GM12878 (cell line): ENCODE measurements at regions of chr7 and their contacts with region 1.

Region 1: DNA sequence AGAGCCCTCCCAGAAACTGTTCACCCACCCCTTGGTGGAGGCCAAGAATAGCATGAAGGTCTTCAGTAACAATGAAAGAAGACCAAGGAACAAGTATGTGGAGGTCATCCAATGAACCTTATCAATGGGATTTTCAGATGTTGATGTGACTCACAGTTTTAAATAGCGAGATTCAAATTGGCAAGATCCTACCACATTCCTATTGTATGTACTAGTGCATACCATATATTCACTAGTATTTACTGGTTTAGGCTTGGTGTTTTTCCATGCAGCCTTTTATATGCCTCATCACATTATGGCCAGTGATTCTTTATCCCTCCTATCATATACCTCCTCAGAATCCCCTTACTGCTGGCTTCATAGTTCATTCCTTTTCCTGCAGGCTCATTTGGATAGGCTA is 54.4 kb downstream of the ITGB8 start:
- DNase-seq: no peak
- ATAC-seq: no peak
- H3K4me3 ChIP-seq: no peak overlapping the region
- H3K27ac ChIP-seq: no peak overlapping the region
- H3K4me1 ChIP-seq: no peaks in the 10 kb centered on the region
- H3K27me3 ChIP-seq: no peaks in the 10 kb centered on the region
- CTCF ChIP-seq: no peak
- EP300 ChIP-seq: no peak
- POLR2A ChIP-seq: no peak
- RAD21 ChIP-seq: no peak

Region 2: DNA sequence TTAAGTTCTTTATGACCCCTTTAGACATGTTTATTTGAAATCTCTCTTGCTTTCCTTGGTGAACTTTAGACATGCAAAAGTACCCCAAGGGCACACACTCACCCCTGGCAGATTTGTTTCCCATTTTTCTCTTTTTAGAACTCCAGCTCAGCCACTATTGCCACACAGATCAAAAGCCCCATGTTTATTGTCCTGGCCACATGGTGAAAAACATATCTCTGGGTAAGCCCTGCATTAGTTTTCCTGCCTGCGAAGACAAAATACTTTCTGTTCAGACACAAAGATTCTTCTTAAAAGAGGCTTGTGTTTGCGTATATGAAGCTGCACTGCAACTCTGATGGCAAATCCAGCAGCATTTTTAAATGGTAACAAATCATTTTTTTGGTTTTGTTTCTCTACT is 876.3 kb before region 1 on chr7:
- CTCF ChIA-PET with region 1: no interaction called
- POLR2A ChIA-PET with region 1: no interaction called
- RAD21 ChIA-PET with region 1: no interaction called
- SMC1A ChIA-PET with region 1: no interaction called
- in situ Hi-C with region 1: no loop called
- intact Hi-C with region 1: no loop called
- DNase-seq: no peak
- ATAC-seq: no peak
- H3K4me3 ChIP-seq: no peak overlapping the region
- H3K27ac ChIP-seq: no peak overlapping the region
- H3K4me1 ChIP-seq: no peaks in the 10 kb centered on the region
- H3K27me3 ChIP-seq: no peaks in the 10 kb centered on the region
- CTCF ChIP-seq: no peak
- EP300 ChIP-seq: no peak
- POLR2A ChIP-seq: no peak
- RAD21 ChIP-seq: no peak

Region 3: DNA sequence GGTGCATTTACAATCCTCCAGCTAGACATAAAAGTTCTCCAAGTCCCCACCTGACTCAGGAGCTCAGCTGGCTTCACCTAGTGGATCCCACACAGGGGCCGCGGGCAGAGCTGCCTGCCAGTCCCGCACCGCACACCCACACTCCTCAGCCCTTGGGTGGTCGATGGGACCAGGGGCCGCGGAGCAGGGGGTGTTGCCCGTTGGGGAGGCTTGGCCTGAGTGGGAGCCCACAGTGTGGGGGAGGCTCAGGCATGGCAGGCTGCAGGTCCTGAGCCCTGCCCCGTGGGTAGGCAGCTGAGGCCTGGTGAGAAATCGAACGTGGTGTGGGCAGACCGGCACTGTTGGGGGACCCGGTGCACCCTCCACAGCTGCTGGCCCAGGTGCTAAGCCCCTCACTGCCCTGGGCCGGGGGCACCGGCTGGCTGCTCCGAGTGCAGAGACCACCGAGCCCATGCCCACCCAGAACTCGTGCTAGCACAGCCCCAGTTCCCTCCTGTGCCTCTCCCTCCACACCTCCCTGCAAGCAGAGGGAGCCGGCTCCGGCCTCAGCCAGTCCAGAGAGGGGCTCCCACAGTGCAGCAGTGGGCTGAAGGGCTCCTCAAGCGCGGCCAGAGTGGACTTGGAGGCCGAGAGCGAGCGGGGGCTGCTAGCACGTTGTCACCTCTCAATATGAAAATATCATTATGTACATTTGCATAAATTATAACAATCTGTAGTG is 692.9 kb before region 1 on chr7:
- CTCF ChIA-PET with region 1: no interaction called
- POLR2A ChIA-PET with region 1: no interaction called
- RAD21 ChIA-PET with region 1: no interaction called
- SMC1A ChIA-PET with region 1: no interaction called
- in situ Hi-C with region 1: no loop called
- intact Hi-C with region 1: no loop called
- DNase-seq: no peak
- ATAC-seq: no peak
- H3K4me3 ChIP-seq: no peak overlapping the region
- H3K27ac ChIP-seq: no peak overlapping the region
- H3K4me1 ChIP-seq: no peaks in the 10 kb centered on the region
- H3K27me3 ChIP-seq: no peaks in the 10 kb centered on the region
- CTCF ChIP-seq: no peak
- EP300 ChIP-seq: no peak
- POLR2A ChIP-seq: no peak
- RAD21 ChIP-seq: no peak

Region 4: DNA sequence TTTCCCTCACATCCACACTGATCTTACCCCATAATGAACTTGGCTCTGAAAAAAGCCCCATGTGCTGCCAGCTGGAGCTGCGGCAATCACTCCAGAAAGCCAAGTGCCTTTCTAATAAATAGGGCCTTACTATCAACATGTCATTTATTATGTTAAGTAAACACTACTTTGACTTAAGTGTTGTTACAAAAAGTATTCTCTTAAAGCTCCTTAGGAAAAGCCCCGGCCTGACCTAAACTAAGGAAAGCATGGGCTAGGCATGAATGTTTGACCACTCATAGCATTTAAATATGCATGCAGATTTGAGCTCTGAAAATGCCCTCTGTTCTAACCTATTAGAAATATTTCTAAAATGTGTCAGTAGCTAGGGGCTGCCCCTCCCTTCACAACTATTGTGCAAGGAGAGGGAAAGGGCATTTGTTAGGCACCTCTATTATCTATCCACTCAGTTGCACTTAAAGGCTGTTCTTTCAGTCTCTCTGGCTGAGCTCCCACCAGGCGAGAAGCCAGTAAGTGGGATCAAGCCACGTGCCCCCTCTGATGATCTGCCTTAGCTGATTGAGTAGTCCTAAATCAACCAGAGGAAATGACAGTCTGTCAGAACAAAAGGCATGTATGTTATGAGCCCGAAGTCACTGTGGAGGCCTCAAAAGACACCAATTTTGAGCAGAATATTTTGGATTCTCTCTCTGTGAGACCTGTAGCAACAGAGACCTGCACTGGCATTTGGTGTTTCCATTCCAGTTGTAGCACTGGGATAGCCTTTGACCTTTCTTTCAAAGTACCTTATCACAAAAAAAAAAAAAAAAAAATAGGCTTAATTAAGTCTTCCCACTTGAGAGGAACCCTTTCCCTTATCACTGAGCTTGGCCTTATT is 22.7 kb after region 1 on chr7:
- CTCF ChIA-PET with region 1: interaction called, 14 read pairs
- POLR2A ChIA-PET with region 1: no interaction called
- RAD21 ChIA-PET with region 1: no interaction called
- SMC1A ChIA-PET with region 1: no interaction called
- in situ Hi-C with region 1: no loop called
- intact Hi-C with region 1: no loop called
- DNase-seq: no peak
- ATAC-seq: no peak
- H3K4me3 ChIP-seq: no peak overlapping the region
- H3K27ac ChIP-seq: no peak overlapping the region
- H3K4me1 ChIP-seq: no peaks in the 10 kb centered on the region
- H3K27me3 ChIP-seq: no peaks in the 10 kb centered on the region
- CTCF ChIP-seq: no peak
- EP300 ChIP-seq: no peak
- POLR2A ChIP-seq: no peak
- RAD21 ChIP-seq: no peak